ENCODE measurements at regions of chr3 and their contacts with region 1.

Region 1: DNA sequence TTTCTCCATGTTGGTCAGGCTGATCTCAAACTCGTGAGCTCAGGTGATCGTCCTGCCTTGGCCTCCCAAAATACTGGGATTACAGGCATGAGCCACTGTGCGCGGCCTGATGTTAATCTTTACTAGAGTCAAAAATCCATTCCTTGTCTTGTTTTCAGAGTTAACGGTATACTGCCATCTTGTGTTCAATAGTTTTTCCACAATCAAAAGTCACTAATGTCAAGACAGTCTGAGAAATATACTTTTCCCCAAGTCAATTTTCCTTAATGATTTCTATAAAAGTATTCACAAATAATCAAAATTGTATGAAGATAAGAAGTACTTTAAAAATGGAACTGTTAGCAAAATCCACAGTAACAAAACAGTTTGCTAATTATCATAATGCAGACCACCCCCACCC is 8.5 kb downstream of the CRBN start:
- DNase-seq: peak; percentile 29
- ATAC-seq: peak; percentile 57
- H3K4me3 Mint-ChIP-seq: no peak overlapping the region
- H3K27ac Mint-ChIP-seq: peak overlapping the region; percentile 93
- H3K4me1 Mint-ChIP-seq: peaks cover 71% of the 10 kb centered on the region
- H3K27me3 Mint-ChIP-seq: no peaks in the 10 kb centered on the region

Region 2: DNA sequence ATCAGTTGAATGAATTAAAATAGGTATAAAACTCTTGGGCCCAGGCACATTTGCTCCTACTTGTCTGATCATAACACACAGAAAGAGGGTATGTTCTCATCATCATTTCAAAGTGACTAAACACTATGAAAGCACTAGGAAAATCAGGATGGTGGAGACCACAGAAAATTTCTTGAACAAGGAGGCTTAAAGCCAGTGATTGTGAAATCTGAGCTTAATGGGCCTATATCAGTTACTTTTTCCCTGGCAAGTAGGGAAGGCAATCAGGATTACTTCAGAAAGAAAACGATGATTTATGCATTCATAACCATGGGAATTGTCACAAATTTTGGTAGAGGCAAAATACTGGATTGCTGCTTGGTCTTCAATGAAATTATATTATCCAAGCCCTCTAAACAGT is 1506.7 kb before region 1 on chr3:
- CTCF ChIA-PET with region 1: no interaction called
- POLR2A ChIA-PET with region 1: no interaction called
- intact Hi-C with region 1: no loop called
- DNase-seq: no peak
- ATAC-seq: no peak
- H3K4me3 Mint-ChIP-seq: no peak overlapping the region
- H3K27ac Mint-ChIP-seq: no peak overlapping the region
- H3K4me1 Mint-ChIP-seq: no peaks in the 10 kb centered on the region
- H3K27me3 Mint-ChIP-seq: no peaks in the 10 kb centered on the region

Region 3: GRCh38 chr3:2036076-2036475 is 1134.9 kb before region 1 on chr3:
- CTCF ChIA-PET with region 1: no interaction called
- POLR2A ChIA-PET with region 1: no interaction called
- intact Hi-C with region 1: no loop called
- DNase-seq: no peak
- ATAC-seq: no peak
- H3K4me3 Mint-ChIP-seq: no peak overlapping the region
- H3K27ac Mint-ChIP-seq: no peak overlapping the region
- H3K4me1 Mint-ChIP-seq: no peaks in the 10 kb centered on the region
- H3K27me3 Mint-ChIP-seq: no peaks in the 10 kb centered on the region

Region 4: DNA sequence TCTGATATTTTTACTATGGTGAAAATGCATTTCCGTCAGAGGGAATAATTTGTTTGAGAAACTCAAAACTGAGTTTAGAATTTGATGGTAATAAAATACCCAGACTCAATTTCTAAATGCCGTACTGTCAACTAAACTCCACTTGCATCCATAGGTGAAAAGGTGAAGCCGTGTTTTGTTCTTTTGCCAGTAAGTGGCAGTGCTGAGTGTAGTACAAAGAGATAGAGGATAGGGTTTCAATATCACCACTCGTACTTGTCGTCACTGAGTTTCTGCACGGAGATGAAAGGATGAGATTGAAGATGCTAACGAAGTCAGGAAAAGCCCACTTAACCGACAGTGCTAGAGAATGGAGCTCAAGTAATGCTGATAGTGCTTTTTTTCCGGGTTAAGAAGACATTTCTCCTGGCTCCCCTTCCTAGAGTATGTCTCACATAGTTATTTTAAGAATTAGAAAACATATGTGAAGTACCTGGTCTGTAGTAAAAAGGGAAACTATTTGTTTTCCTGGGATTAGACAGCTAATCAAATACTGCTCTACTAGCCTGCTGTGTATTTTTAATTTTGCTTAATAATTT is 405.9 kb before region 1 on chr3:
- CTCF ChIA-PET with region 1: interaction called, 4 read pairs
- POLR2A ChIA-PET with region 1: no interaction called
- intact Hi-C with region 1: loop called (anchors 1 to 10 kb)
- DNase-seq: peak; percentile 12
- ATAC-seq: peak; percentile 64
- H3K4me3 Mint-ChIP-seq: no peak overlapping the region
- H3K27ac Mint-ChIP-seq: no peak overlapping the region
- H3K4me1 Mint-ChIP-seq: peaks cover 3% of the 10 kb centered on the region
- H3K27me3 Mint-ChIP-seq: peaks cover 10% of the 10 kb centered on the region

Region 5: DNA sequence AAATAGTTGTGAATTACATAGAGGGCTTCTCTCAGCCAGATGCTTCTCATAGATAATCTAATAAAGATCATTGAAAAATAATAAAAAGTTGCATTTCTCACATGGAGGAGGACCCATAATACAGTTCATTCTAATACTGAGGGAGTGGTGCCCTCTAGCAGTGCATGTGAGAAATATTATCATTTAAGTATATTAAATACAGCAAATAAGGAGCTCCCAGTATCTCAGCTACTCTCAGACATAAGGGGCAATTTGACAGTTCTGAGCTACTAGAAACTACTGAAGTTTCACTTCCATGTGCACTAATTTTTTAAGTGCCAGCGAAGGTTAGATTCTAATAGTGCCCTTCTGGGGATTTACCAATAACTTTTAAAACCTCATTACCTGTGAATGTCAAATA is 249.1 kb before region 1 on chr3:
- CTCF ChIA-PET with region 1: interaction called, 3 read pairs
- POLR2A ChIA-PET with region 1: no interaction called
- intact Hi-C with region 1: loop called in 1 of 2 experiments (anchors 2 kb)
- DNase-seq: no peak
- ATAC-seq: no peak
- H3K4me3 Mint-ChIP-seq: no peak overlapping the region
- H3K27ac Mint-ChIP-seq: no peak overlapping the region
- H3K4me1 Mint-ChIP-seq: no peaks in the 10 kb centered on the region
- H3K27me3 Mint-ChIP-seq: peaks cover 4% of the 10 kb centered on the region

Region 6: DNA sequence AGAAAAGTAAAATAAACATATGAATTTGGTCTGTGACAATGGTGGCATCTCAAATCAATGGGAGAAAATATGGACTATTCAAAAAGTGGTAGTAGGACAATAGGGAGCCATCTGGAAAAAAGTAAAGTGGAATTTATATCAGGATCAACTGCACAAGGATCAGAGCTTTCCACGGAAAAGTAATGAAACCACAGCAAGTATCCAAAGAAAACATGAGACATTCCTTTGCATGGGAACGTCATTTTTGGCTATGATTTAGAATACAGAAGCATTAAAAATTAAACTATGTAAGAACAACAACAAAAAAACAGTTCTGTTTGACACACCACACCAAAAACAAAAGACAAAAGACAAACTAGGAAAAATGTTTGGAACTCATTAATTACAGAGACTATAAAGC is 10.2 kb before region 1 on chr3:
- CTCF ChIA-PET with region 1: interaction called, 20 read pairs
- POLR2A ChIA-PET with region 1: no interaction called
- intact Hi-C with region 1: no loop called
- DNase-seq: no peak
- ATAC-seq: no peak
- H3K4me3 Mint-ChIP-seq: no peak overlapping the region
- H3K27ac Mint-ChIP-seq: peak overlapping the region; percentile 25
- H3K4me1 Mint-ChIP-seq: peaks cover 49% of the 10 kb centered on the region
- H3K27me3 Mint-ChIP-seq: no peaks in the 10 kb centered on the region